Esophagus muscularis mucosa (tissue), 4 donors: ENCODE measurements at regions of chr10 and their contacts with region 1.

Region 1: GRCh38 chr10:102225646-102226541 is at the start of gene ELOVL3:
- DNase-seq: peak; percentile 96
- H3K4me3 ChIP-seq: peak within 1 kb of the TSS; percentile 34 to 54 (median 41)
- H3K27ac ChIP-seq: peak within 1 kb of the TSS; percentile 53 to 76 (median 70)
- H3K4me1 ChIP-seq: peaks cover 24 to 32% (median 30%) of the 10 kb centered on the region in 4 donors
- H3K27me3 ChIP-seq: peaks cover 4 to 35% (median 8%) of the 10 kb centered on the region in 4 donors
- CTCF ChIP-seq: peak in 1 of 3 experiments; percentile 8
- EP300 ChIP-seq: no peak
- POLR2A ChIP-seq: no peak
- total RNA-seq, gene ELOVL3: 0.19 TPM in 1 of 4 donors, not detected in the others

Region 2: DNA sequence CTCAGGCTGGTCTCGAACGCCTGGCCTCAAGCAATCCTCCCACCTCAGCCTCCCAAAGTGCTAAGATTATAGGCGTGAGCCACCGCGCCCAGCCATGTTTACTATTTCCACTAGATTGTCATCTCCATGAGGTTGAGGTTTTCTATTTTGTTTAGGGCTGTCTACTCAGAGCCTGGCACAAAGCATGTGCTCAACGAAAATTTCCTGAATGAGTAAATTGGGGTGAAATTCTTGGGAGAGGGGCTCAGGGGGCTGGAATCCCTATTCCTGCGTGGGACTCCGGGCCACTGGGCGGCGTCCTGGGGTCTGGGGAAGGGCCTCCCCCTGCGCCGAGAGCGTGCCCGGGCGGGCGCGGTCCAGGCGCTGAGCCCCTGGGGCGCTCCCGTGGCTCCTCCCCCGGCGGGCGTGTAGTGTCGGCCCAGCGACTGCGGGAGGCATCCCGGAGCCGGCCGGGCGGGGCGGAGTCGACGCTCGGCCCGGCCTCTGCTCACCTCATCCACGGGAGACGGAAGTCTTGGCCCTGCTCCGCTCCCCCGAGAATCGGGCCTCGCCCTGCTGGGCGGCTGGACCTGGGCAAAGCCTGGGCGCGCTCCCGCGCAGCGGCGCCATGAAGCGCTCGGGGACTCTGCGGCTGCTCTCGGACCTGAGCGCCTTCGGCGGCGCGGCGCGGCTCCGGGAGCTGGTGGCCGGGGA is 160.9 kb before region 1 on chr10 and contains the start of gene HPS6:
- intact Hi-C with region 1: no loop called
- DNase-seq: peak; percentile 94
- H3K4me3 ChIP-seq: peak within 1 kb of the TSS; percentile 69 to 99 (median 84)
- H3K27ac ChIP-seq: peak within 1 kb of the TSS; percentile 88 to 98 (median 94)
- H3K4me1 ChIP-seq: peaks cover 32 to 44% (median 37%) of the 10 kb centered on the region in 4 donors
- H3K27me3 ChIP-seq: no peaks in the 10 kb centered on the region
- CTCF ChIP-seq: peak; percentile 14 to 28 (median 19)
- EP300 ChIP-seq: no peak
- POLR2A ChIP-seq: no peak
- total RNA-seq, gene HPS6: 21.2 to 40.0 (median 28.2) TPM

Region 3: DNA sequence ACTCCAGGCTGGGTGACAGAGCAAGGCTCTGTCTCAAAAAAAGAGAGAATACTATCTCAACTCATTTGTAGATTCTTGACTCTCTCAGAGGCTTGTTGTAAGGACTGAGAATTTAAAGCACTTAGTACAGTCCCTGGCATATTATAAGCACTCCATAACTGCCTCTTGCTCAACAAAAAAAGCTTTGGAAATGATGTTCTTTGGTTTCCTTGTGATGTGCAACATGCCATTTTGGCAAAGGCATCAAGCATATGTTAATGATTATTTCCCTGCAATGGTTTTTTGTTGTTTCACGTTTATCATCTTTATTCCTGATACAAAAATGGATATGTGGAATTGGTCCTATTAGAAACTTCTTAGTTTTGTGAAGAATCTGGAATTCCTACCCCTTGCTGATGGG is 58.0 kb before region 1 on chr10:
- intact Hi-C with region 1: loop called (anchors 5 kb)
- DNase-seq: no peak
- H3K4me3 ChIP-seq: no peak overlapping the region
- H3K27ac ChIP-seq: no peak overlapping the region
- H3K4me1 ChIP-seq: peaks cover 3 to 13% (median 12%) of the 10 kb centered on the region in 4 donors
- H3K27me3 ChIP-seq: no peaks in the 10 kb centered on the region
- CTCF ChIP-seq: no peak
- EP300 ChIP-seq: no peak
- POLR2A ChIP-seq: no peak

Region 4: GRCh38 chr10:102352066-102352715 is 126.3 kb after region 1 on chr10:
- intact Hi-C with region 1: loop called (anchors 1 kb)
- DNase-seq: no peak
- H3K4me3 ChIP-seq: no peak overlapping the region
- H3K27ac ChIP-seq: no peak overlapping the region
- H3K4me1 ChIP-seq: peaks cover 0 to 7% (median 0%) of the 10 kb centered on the region in 4 donors
- H3K27me3 ChIP-seq: no peaks in the 10 kb centered on the region
- CTCF ChIP-seq: peak; percentile 86 to 93 (median 89)
- EP300 ChIP-seq: no peak
- POLR2A ChIP-seq: no peak